HepG2 (cell line): ENCODE measurements at regions of chr3 and their contacts with region 1.

Region 1: DNA sequence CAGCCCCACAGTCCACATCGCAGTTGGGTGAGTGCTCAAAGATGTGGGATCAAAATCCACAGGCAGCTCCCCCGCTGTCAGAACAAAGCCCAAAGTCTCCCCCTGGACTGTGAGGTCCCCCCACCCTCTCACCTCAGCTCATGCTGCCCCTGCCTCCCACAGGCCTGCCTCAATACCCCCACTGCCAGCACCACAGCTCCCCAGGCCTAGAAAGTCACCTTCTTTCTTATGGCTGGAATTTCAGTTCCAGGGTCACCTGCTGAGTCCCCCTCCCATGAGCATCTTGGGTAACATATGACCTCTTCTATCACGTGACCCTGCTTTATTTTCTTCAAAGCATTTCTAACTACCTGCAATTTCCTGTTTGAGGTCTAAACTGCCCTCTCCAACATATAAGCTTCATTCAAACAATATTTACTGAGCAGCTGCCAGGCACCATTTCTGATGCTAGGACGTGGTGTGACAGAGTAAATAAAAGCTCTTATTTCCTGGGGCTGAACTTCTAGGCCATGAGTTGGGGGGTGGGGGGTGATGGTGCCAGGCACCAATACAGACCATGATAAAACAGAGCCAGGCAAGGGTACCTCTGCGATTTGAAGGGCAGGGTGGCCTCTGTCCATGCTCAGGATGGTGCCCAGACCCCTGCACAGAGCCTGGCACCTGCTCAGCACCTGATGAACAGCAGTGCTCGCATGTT is 2.4 kb upstream of the TMEM89 start:
- DNase-seq: peak; percentile 93
- ATAC-seq: peak; percentile 71
- H3K4me3 ChIP-seq: peak overlapping the region; percentile 8 to 41 (median 23); a peak in 4 of 6 replicates
- H3K27ac ChIP-seq: peak overlapping the region; percentile 93
- H3K4me1 ChIP-seq: peaks cover 72% of the 10 kb centered on the region
- H3K27me3 ChIP-seq: no peaks in the 10 kb centered on the region
- CTCF ChIP-seq: 0 out of 2 replicates have a peak, but pooled peaks have one; percentile 7
- EP300 ChIP-seq: peak in 1 of 2 experiments; percentile 81; a peak in 2 of 4 replicates
- POLR2A ChIP-seq: no peak; a peak in 1 of 4 replicates
- RAD21 ChIP-seq: no peak

Region 2: DNA sequence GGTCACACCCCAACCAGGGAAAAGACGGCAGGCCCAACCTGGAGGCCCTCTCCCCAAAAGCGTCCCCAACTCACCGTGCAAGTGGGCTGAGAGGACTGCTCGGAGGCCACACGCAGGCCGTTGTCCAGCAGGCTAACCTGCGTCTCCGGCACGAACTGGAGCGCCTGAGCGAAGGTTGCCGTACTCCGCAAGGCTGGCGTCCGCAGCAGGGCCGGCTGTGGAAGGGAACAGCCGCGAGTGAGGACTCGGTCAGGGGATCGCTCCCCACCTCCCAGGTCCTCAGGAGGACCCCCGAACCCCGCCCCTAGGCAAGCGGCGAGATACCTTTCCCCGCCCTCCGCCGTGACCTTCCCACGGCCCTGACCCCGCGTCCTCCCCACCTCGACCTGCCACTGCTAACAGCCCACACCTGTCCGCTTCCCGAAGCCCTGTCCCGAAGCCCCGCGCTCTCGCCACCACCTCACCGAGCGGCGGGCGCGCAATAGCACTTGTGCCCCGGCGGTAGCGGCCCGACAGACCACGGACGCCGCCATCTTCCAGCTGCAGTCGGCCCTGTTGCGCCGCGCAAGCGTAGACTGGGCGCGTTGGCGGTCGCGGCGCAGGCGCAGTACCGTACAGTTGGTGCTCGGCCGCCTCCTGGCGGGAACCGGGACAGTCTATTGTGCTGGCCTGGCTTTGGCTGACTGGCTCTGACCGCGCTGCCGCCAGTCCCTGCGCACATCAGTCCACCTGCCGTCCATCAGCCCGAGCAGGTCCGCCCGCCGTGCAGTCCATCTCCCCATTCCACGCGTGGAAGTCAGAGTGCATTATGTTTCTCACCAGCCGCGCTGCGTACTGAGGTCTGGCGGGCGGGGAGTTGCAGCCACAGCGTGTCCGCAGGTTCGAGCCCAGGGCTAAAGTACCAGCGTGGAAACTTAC is 14.7 kb before region 1 on chr3 and contains the start of gene UQCRC1:
- CTCF ChIA-PET with region 1: no interaction called
- POLR2A ChIA-PET with region 1: interaction called, 12 read pairs
- in situ Hi-C with region 1: no loop called
- intact Hi-C with region 1: no loop called
- DNase-seq: peak; percentile 85
- ATAC-seq: peak; percentile 98
- H3K4me3 ChIP-seq: peak within 1 kb of the TSS; percentile 77 to 98 (median 96)
- H3K27ac ChIP-seq: peak within 1 kb of the TSS; percentile 68
- H3K4me1 ChIP-seq: peaks cover 58% of the 10 kb centered on the region
- H3K27me3 ChIP-seq: no peaks in the 10 kb centered on the region; a peak in 1 of 5 replicates
- CTCF ChIP-seq: peak; percentile 98
- EP300 ChIP-seq: no peak
- POLR2A ChIP-seq: peak; percentile 84 to 95
- RAD21 ChIP-seq: peak; percentile 85
- total RNA-seq, gene UQCRC1: 273 and 316 TPM in 2 replicates

Region 3: GRCh38 chr3:48663415-48664312 is 39.7 kb after region 1 on chr3:
- CTCF ChIA-PET with region 1: no interaction called
- POLR2A ChIA-PET with region 1: interaction called, 33 read pairs
- in situ Hi-C with region 1: no loop called
- intact Hi-C with region 1: no loop called
- DNase-seq: peak; percentile 96
- ATAC-seq: peak; percentile 86
- H3K4me3 ChIP-seq: peak overlapping the region; percentile 50 to 77 (median 58); a peak in 5 of 6 replicates
- H3K27ac ChIP-seq: peak overlapping the region; percentile 96
- H3K4me1 ChIP-seq: peaks cover 21% of the 10 kb centered on the region
- H3K27me3 ChIP-seq: no peaks in the 10 kb centered on the region
- CTCF ChIP-seq: peak; percentile 87
- EP300 ChIP-seq: peak in 1 of 2 experiments; percentile 63; a peak in 3 of 4 replicates
- POLR2A ChIP-seq: no peak; a peak in 1 of 4 replicates
- RAD21 ChIP-seq: peak; percentile 32; the same call in 1 of the 2 replicates

Region 4: GRCh38 chr3:48708481-48708889 is 84.5 kb after region 1 on chr3:
- CTCF ChIA-PET with region 1: no interaction called
- POLR2A ChIA-PET with region 1: no interaction called
- in situ Hi-C with region 1: no loop called
- intact Hi-C with region 1: no loop called
- DNase-seq: no peak
- ATAC-seq: no peak
- H3K4me3 ChIP-seq: no peak overlapping the region
- H3K27ac ChIP-seq: no peak overlapping the region
- H3K4me1 ChIP-seq: peaks cover 35% of the 10 kb centered on the region
- H3K27me3 ChIP-seq: no peaks in the 10 kb centered on the region
- CTCF ChIP-seq: no peak
- EP300 ChIP-seq: no peak
- POLR2A ChIP-seq: no peak
- RAD21 ChIP-seq: no peak

Region 5: DNA sequence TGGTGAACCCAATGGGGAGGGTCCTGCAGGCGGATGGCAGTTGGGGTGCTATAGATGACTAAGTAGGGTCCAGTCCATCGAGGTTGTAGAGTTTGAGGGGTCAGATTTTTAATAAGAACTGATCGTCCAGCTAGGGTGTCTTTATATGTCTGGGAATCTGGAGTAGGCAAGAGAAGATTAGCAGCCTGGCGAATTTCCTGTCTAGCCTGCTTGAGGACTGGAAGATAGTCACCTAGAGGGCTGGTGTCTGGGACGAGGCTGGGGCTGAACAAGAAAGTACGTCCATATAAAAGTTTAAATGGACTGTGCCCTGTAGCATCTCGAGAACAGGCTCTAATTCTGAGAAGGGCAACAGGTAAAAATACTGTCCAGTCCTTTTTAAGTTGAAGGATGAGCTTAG is 99.7 kb after region 1 on chr3:
- CTCF ChIA-PET with region 1: no interaction called
- POLR2A ChIA-PET with region 1: no interaction called
- in situ Hi-C with region 1: no loop called
- intact Hi-C with region 1: no loop called
- DNase-seq: no peak
- ATAC-seq: no peak
- H3K4me3 ChIP-seq: no peak overlapping the region
- H3K27ac ChIP-seq: no peak overlapping the region
- H3K4me1 ChIP-seq: peaks cover 12% of the 10 kb centered on the region; the same call in 1 of the 2 replicates
- H3K27me3 ChIP-seq: peaks cover 0 to 4% of the 10 kb centered on the region in 2 experiments; a peak in 1 of 5 replicates
- CTCF ChIP-seq: no peak
- EP300 ChIP-seq: no peak
- POLR2A ChIP-seq: no peak
- RAD21 ChIP-seq: no peak

Region 6: GRCh38 chr3:49093853-49094767 is 470.1 kb after region 1 on chr3 and contains the start of gene QRICH1:
- CTCF ChIA-PET with region 1: no interaction called
- POLR2A ChIA-PET with region 1: no interaction called
- in situ Hi-C with region 1: no loop called
- intact Hi-C with region 1: no loop called
- DNase-seq: peak; percentile 96
- ATAC-seq: peak; percentile 89
- H3K4me3 ChIP-seq: peak within 1 kb of the TSS; percentile 96 to 100 (median 99)
- H3K27ac ChIP-seq: peak within 1 kb of the TSS; percentile 98
- H3K4me1 ChIP-seq: peaks cover 29% of the 10 kb centered on the region
- H3K27me3 ChIP-seq: no peaks in the 10 kb centered on the region; a peak in 1 of 5 replicates
- CTCF ChIP-seq: peak; percentile 73
- EP300 ChIP-seq: no peak; a peak in 1 of 4 replicates
- POLR2A ChIP-seq: peak; percentile 67 to 86; a peak in 3 of 4 replicates
- RAD21 ChIP-seq: no peak; the same call in none of the 2 replicates
- total RNA-seq, gene QRICH1: 35.5 and 52.6 TPM in 2 replicates